Activated T-helper 1 cell treated with anti-CD3 and anti-CD28 coated beads, Interleukin-12 subunit alpha, Interleukin-12 subunit beta, Interleukin-2, Interleukin-4 antibody, amounts not matched to agents 30 ng/mL and 10 ng/mL and 1 ng/mL, durations not matched to agents 14 hours and 24 hours and 36 hours (primary cell): ENCODE measurements at regions of chr15 and their contacts with region 1.

Region 1: GRCh38 chr15:45402162-45402954 is 24.0 kb upstream of the GATM start:
- DNase-seq: peak; percentile 92
- H3K4me3 Mint-ChIP-seq: peak overlapping the region; percentile 94
- H3K27ac Mint-ChIP-seq: peak overlapping the region; percentile 84
- H3K4me1 Mint-ChIP-seq: peaks cover 40% of the 10 kb centered on the region
- H3K27me3 Mint-ChIP-seq: peaks cover 4% of the 10 kb centered on the region

Region 2: DNA sequence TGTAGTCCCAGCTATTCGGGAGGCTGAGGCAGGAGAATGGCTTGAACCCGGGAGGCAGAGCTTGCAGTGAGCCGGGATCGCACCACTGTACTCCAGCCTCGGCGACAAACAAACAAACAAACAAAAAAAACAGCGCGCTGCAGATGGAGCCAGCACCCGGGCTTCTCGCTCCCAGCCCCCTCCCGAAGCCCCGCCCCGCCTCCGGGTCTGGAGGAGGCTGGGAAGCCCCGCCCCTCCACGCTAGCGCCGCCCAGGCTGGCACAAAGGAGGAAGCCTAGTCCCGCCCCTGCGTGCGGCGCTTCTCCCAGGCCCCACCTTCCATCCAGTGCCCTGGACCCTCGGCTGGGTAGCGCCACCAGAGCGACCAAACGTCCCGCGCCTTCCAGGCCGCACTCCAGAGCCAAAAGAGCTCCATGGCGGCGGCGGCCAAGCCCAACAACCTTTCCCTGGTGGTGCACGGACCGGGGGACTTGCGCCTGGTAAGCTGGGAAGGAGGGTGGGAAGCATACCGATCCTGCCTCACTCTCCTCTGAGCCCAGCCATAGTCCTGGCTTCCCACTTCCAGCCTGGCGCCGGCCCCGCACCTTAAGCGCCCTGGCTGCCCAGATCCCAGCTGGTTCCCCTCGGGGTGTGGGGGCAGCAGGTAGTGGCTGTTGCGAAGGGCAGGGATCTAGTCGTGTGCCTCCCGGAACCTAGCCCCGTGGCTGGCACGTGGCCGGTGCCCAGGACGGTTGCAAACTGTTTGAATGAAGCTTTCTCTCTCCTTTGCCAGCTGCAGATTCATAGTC is 379.3 kb before region 1 on chr15 and contains the start of gene SORD:
- intact Hi-C with region 1: loop called (anchors 5 kb)
- DNase-seq: peak; percentile 86
- H3K4me3 Mint-ChIP-seq: peak within 1 kb of the TSS; percentile 87
- H3K27ac Mint-ChIP-seq: peak within 1 kb of the TSS; percentile 81
- H3K4me1 Mint-ChIP-seq: peaks cover 16% of the 10 kb centered on the region
- H3K27me3 Mint-ChIP-seq: peaks cover 13% of the 10 kb centered on the region
- total RNA-seq, gene SORD: 19.9 and 21.5 TPM in 2 replicates

Region 3: DNA sequence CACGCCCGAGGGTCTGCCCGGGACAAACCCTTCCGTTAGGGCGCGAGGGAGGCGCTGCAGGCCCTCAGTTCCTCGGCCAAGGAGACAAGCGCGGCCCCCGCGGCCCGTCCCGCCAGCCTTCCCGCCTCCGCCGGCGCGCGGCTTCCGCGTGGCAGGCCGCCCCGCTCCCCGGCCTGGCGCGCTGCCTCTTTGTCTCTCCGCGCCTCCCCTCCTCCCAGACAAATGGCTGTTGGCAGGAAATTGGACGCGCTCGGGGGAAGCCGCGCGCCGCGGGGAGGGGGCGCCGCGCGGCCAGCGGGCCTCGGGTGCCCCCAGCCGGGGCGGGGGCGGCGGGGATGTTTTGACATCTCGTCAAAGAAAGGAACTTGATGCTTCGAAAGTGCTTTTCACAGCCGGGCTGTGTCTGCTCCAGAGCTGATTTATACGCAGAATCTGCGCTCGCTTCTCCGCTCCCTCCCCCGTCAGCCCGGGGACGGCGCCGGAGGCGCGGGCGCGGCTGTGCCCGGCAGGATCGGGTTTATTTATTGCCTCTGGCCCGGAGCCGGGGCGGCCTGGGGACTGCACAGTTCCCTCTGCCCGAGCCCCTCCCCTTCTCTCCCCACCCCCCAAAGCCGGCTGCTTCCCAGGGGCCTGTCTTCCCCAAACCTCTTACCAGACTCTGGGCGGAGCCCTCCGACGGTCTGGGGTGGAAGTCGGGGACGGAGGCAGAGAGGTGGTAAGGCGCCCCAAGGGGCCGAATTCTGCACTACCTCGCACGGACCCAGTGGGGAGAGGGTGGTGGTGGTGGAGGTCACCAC is 235.3 kb before region 1 on chr15:
- intact Hi-C with region 1: loop called (anchors 1 kb)
- DNase-seq: peak; percentile 77
- H3K4me3 Mint-ChIP-seq: peak overlapping the region; percentile 75
- H3K27ac Mint-ChIP-seq: peak overlapping the region; percentile 81
- H3K4me1 Mint-ChIP-seq: peaks cover 21% of the 10 kb centered on the region
- H3K27me3 Mint-ChIP-seq: no peaks in the 10 kb centered on the region

Region 4: DNA sequence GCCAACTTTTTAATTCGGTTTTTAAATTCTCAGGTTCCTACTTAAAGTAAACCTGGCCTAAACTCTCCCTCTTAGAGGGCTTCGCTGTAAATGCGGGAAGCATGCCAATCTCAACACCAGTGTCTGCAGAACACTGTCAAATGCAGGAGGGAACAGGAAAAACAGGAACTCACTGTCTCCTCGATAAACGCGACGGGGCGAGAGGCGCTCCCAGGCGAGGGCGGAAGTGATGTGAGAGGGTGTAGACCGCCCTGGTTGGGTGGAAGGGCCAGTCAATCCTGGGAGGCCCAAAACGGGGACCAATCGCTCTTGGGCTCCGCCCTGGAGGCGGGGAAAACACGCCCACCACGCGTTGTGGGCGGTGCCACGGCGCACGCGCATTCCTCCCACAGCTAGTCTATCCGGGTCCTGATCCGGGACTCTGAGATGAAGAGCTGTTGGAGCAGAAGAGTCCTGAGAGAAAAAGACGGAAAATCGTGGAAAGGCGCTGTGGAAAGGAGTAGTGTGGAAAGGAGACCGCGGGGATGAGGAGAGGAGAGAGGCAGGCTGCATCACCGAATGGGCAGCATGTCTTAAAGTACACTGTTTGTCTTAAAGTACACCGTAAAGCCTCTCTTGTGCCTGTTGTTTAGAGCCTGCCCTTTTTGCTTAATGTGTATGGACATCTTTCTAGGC is 123.2 kb before region 1 on chr15:
- intact Hi-C with region 1: loop called (anchors 1 kb)
- DNase-seq: peak; percentile 95
- H3K4me3 Mint-ChIP-seq: peak overlapping the region; percentile 90
- H3K27ac Mint-ChIP-seq: peak overlapping the region; percentile 77
- H3K4me1 Mint-ChIP-seq: peaks cover 7% of the 10 kb centered on the region
- H3K27me3 Mint-ChIP-seq: peaks cover 12% of the 10 kb centered on the region

Region 5: DNA sequence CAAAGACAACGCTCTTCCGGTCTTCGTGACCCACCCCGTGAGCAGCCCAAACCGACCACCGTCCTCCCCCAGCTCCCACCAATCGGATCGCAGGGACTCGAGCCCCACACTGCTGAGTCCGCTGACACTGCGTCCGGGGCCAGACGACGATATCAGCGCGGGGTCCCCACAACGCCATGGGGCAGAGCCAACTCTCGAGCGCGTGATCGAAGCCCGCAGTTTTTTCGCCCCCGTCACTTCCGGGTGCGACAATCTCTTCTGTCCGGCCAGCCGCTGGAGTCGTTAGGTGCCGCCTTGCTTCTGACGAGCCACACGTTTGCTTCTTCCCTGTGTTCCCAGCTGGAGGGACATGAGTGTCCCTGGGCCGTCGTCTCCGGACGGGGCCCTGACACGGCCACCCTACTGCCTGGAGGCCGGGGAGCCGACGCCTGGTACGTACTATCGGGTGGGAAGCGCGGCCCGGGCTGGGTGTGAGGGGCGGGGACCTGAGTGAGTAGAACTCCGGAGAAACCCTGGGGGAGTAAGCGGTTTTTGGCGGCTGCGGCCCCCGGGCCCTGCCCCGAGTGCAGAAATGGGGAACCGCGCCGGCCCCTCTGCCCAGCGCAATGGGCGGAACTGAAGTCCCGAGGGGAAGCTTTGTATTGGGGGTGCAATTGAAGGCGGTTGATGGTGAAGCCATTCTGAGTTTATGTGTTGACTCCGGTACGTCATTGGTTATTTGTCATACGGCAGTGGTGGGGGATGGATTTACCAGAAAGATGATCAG is 184.9 kb after region 1 on chr15 and contains the start of gene BLOC1S6:
- intact Hi-C with region 1: loop called (anchors 1 kb)
- DNase-seq: peak; percentile 84
- H3K4me3 Mint-ChIP-seq: peak within 1 kb of the TSS; percentile 100
- H3K27ac Mint-ChIP-seq: peak within 1 kb of the TSS; percentile 100
- H3K4me1 Mint-ChIP-seq: peaks cover 43% of the 10 kb centered on the region
- H3K27me3 Mint-ChIP-seq: no peaks in the 10 kb centered on the region
- total RNA-seq, gene BLOC1S6: 50.6 TPM in 2 replicates